ENCODE measurements at regions of chr13 and their contacts with region 1.

Region 1: DNA sequence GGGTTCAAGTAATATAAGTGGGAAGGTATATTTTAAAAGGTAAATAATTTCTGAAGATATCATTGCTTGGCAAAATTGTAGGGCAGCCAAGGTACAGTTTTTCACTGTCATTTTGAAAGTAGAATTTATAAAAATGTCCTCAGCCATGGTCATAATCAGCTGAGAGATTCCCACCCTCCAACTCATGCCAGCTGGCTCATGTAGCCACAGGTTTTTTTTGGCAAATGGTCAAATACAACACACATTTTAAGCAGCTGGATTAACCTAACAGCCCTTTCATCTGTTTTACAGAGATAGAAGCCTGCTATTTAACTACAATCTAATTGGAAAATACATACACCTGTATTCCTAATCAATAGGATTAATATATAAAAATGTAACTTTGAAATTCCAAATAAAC is 619.2 kb upstream of the SGCG start:
- DNase-seq: no peak
- ATAC-seq: no peak
- H3K4me3 ChIP-seq: no peak overlapping the region
- H3K27ac ChIP-seq: no peak overlapping the region
- H3K4me1 ChIP-seq: no peaks in the 10 kb centered on the region
- H3K27me3 ChIP-seq: no peaks in the 10 kb centered on the region
- CTCF ChIP-seq: no peak
- EP300 ChIP-seq: no peak
- POLR2A ChIP-seq: no peak
- RAD21 ChIP-seq: no peak

Region 2: DNA sequence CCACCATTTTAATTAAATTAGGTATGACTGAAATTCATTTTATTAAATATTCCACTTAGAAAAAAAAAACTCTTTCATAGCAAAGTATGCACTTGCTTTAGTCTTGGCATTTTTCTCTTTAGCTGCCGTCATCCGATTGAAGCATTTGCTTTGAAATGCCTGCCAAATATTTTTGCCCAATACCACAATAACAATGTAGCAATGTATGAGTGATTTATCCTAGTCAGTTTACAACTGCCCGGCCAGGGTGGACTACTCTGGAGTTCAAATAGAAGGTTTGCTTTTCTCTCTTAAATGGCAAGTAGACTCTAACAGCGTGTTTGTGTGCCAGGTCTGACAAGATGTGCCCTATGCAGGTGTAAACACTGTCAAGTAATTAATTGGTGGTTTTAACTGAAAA is 56.1 kb before region 1 on chr13:
- CTCF ChIA-PET with region 1: no interaction called
- POLR2A ChIA-PET with region 1: no interaction called
- RAD21 ChIA-PET with region 1: no interaction called
- SMC1A ChIA-PET with region 1: no interaction called
- in situ Hi-C with region 1: no loop called
- intact Hi-C with region 1: no loop called
- DNase-seq: no peak
- ATAC-seq: no peak
- H3K4me3 ChIP-seq: no peak overlapping the region
- H3K27ac ChIP-seq: no peak overlapping the region
- H3K4me1 ChIP-seq: no peaks in the 10 kb centered on the region
- H3K27me3 ChIP-seq: no peaks in the 10 kb centered on the region
- CTCF ChIP-seq: no peak
- EP300 ChIP-seq: no peak
- POLR2A ChIP-seq: no peak
- RAD21 ChIP-seq: no peak

Region 3: DNA sequence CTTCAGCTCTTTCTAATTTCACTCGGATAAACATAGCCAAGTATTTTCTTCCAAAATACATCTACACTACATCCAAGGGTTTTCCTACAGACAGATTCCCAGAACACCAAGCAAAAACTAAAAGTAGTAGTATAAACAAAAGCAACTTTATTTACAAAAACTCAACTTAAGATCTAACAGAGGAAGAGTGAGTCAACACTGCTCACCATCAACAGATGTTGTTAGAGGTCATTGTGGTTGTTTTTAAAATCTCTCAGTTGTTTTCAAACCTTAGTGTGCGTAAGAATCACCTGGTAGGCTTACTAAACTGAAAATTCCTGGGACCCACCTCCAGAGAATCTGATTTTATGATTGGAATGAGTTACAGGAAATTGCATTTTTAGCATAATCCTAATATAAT is 12.5 kb before region 1 on chr13:
- CTCF ChIA-PET with region 1: no interaction called
- POLR2A ChIA-PET with region 1: no interaction called
- RAD21 ChIA-PET with region 1: no interaction called
- SMC1A ChIA-PET with region 1: no interaction called
- in situ Hi-C with region 1: no loop called
- intact Hi-C with region 1: no loop called
- DNase-seq: no peak
- ATAC-seq: no peak
- H3K4me3 ChIP-seq: no peak overlapping the region
- H3K27ac ChIP-seq: no peak overlapping the region
- H3K4me1 ChIP-seq: no peaks in the 10 kb centered on the region
- H3K27me3 ChIP-seq: no peaks in the 10 kb centered on the region
- CTCF ChIP-seq: no peak
- EP300 ChIP-seq: no peak
- POLR2A ChIP-seq: no peak
- RAD21 ChIP-seq: no peak

Region 4: DNA sequence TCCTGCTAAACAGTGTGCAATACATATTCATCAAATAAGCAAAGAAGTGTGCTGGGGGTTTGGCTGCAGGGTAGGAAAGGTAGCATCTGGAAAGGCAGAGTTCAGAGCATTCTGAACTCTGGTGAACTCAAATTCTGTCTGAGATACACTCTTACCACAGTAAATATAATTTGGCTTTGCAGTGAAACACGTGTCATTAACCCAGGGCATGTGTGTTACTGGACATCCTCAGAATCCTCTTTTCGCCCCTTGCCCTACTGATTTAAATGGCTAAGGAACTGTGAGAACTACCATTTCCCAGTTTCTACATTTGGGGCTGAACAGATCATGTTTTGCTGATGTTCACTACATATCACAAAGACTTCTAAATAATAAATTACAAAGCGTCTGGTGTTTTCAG is 56.4 kb after region 1 on chr13:
- CTCF ChIA-PET with region 1: no interaction called
- POLR2A ChIA-PET with region 1: no interaction called
- RAD21 ChIA-PET with region 1: no interaction called
- SMC1A ChIA-PET with region 1: no interaction called
- in situ Hi-C with region 1: loop called (anchors 10 kb)
- intact Hi-C with region 1: no loop called
- DNase-seq: no peak
- ATAC-seq: no peak
- H3K4me3 ChIP-seq: no peak overlapping the region
- H3K27ac ChIP-seq: no peak overlapping the region
- H3K4me1 ChIP-seq: no peaks in the 10 kb centered on the region
- H3K27me3 ChIP-seq: no peaks in the 10 kb centered on the region
- CTCF ChIP-seq: no peak
- EP300 ChIP-seq: no peak
- POLR2A ChIP-seq: no peak
- RAD21 ChIP-seq: no peak